ENCODE measurements at regions of chr19 and their contacts with region 1.

Region 1: GRCh38 chr19:55279770-55280643 is at the start of gene HSPBP1:
- DNase-seq: peak; percentile 88 to 94 (median 92)
- ATAC-seq: peak; percentile 87 to 94 (median 93)
- H3K4me3 ChIP-seq: peak within 1 kb of the TSS; percentile 58 to 91 (median 75)
- H3K27ac ChIP-seq: peak within 1 kb of the TSS; percentile 41 to 92 (median 84)
- H3K4me1 ChIP-seq: peaks cover 0 to 31% (median 11%) of the 10 kb centered on the region in 12 donors
- H3K27me3 ChIP-seq: no peaks in the 10 kb centered on the region
- CTCF ChIP-seq: no peak
- POLR2A ChIP-seq: peak in 1 of 2 donors; percentile 31
- total RNA-seq, gene HSPBP1: 25.7 to 42.0 (median 30.6) TPM

Region 2: GRCh38 chr19:55118401-55118991 is 161.5 kb before region 1 on chr19:
- intact Hi-C with region 1: no loop called
- DNase-seq: peak in 4 of 5 donors; percentile 57 to 84 (median 76)
- ATAC-seq: peak; percentile 12 to 43 (median 23)
- H3K4me3 ChIP-seq: peak overlapping the region; percentile 56 to 98 (median 88)
- H3K27ac ChIP-seq: peak overlapping the region; percentile 74 to 97 (median 88)
- H3K4me1 ChIP-seq: peaks cover 5 to 43% (median 29%) of the 10 kb centered on the region in 12 donors
- H3K27me3 ChIP-seq: no peaks in the 10 kb centered on the region
- CTCF ChIP-seq: no peak
- POLR2A ChIP-seq: peak in 1 of 2 donors; percentile 7

Region 3: DNA sequence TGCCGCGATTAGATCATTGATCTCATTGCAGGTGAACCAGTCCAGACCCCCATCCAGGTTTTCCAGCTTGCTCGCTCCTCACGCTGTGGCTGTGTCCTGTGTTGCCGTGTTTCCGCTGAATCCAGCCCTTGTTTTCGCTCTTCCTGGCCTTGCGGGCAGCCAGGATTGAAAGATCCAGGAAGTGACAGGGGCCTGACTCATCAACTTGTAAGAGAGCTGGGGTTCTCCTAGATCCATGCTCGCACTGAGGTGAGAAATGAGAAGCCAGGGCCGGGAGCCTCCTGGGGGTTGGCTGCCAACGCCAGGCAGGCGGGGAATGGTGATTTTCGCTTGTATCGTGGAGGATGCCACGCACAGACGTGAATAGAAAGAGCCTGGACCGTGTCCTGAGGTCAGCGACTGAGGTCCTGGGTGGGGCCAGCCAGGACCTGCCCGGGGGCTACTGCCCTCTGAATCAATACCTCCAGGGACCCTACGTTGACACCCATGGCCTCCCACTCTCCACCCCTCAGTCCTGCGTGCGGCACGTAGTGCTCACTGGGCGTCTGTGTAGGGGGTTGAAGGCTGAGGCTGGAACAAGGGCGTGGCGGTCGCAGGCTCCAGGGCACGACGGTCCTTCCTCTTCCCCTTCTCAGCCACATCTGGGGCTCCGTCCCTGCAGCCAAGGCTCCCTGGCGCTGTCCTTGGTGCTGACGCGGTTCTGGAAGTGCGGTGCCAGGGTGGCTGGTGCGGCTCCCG is 63.4 kb before region 1 on chr19:
- intact Hi-C with region 1: no loop called
- DNase-seq: peak; percentile 75 to 89 (median 85)
- ATAC-seq: peak; percentile 89 to 95 (median 92)
- H3K4me3 ChIP-seq: peak overlapping the region in 11 of 12 donors; percentile 7 to 60 (median 56)
- H3K27ac ChIP-seq: peak overlapping the region in 10 of 12 donors; percentile 30 to 89 (median 68)
- H3K4me1 ChIP-seq: peaks cover 0 to 16% (median 10%) of the 10 kb centered on the region in 12 donors
- H3K27me3 ChIP-seq: no peaks in the 10 kb centered on the region
- CTCF ChIP-seq: no peak
- POLR2A ChIP-seq: no peak

Region 4: DNA sequence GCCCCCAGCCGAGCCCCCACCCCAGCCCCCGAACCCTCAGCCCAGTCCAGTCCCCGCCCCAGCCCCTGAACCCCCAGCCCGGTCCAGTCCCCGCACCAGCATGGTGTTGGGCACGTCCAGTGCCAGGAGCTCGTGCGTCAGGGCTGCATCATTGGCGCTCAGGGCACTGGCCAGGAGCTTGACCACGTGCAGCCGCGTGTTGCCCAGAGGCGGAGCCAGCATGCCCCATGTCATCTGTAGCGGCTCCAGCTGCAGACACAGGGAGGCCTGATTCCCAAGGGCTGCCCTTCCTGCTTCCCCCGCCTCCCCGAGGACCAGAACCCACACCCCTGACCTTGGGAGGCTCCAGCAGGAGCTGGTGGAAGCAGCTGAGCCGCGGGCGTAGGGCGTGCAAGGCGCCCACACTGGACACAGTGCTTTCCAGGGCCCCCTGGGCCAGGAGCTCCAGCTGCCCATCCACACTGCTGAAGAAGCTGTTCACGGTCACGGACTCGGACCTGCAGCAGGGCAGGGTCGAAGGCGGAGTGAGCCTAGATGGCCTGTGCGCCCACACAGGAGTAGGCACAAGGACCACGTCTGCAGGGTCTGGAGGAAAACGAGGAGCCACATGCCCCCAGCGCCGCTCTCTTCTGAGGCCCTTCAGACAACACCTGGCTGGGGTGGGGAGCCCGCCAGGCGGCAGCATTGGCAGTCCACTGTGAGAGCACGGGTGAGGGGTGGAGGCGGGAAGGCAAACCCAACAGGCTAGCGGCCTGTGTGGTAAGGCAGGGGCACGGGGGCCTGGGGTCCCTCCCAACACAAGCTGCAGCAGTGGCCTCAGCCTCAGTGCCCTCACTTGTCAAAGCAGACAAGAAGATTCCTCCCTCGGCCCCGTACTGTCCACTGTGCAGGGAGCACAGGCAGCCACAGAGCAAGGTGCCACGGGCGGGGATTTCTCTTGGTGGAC is 38.6 kb before region 1 on chr19:
- intact Hi-C with region 1: no loop called
- DNase-seq: peak in 1 of 5 donors; percentile 21
- ATAC-seq: peak in 1 of 4 donors; percentile 6
- H3K4me3 ChIP-seq: no peak overlapping the region
- H3K27ac ChIP-seq: no peak overlapping the region
- H3K4me1 ChIP-seq: no peaks in the 10 kb centered on the region
- H3K27me3 ChIP-seq: no peaks in the 10 kb centered on the region
- CTCF ChIP-seq: no peak
- POLR2A ChIP-seq: no peak

Region 5: GRCh38 chr19:55297267-55297666 is 17.3 kb after region 1 on chr19:
- intact Hi-C with region 1: no loop called
- DNase-seq: no peak
- ATAC-seq: no peak
- H3K4me3 ChIP-seq: no peak overlapping the region
- H3K27ac ChIP-seq: no peak overlapping the region
- H3K4me1 ChIP-seq: peaks cover 0 to 10% (median 4%) of the 10 kb centered on the region in 12 donors
- H3K27me3 ChIP-seq: no peaks in the 10 kb centered on the region
- CTCF ChIP-seq: no peak
- POLR2A ChIP-seq: no peak

Region 6: GRCh38 chr19:55339048-55339888 is 59.3 kb after region 1 on chr19 and contains the start of gene KMT5C:
- intact Hi-C with region 1: loop called in 1 of 10 experiments (anchors 5 kb)
- DNase-seq: peak; percentile 100
- ATAC-seq: peak; percentile 93 to 97 (median 96)
- H3K4me3 ChIP-seq: peak within 1 kb of the TSS; percentile 33 to 94 (median 72)
- H3K27ac ChIP-seq: peak within 1 kb of the TSS; percentile 75 to 94 (median 90)
- H3K4me1 ChIP-seq: peaks cover 0 to 29% (median 16%) of the 10 kb centered on the region in 12 donors
- H3K27me3 ChIP-seq: peaks cover 0 to 7% (median 0%) of the 10 kb centered on the region in 9 donors
- CTCF ChIP-seq: peak in 11 of 12 donors; percentile 12 to 66 (median 35)
- POLR2A ChIP-seq: peak in 1 of 2 donors; percentile 66
- total RNA-seq, gene KMT5C: 3.6 to 10.8 (median 7.2) TPM

Region 7: DNA sequence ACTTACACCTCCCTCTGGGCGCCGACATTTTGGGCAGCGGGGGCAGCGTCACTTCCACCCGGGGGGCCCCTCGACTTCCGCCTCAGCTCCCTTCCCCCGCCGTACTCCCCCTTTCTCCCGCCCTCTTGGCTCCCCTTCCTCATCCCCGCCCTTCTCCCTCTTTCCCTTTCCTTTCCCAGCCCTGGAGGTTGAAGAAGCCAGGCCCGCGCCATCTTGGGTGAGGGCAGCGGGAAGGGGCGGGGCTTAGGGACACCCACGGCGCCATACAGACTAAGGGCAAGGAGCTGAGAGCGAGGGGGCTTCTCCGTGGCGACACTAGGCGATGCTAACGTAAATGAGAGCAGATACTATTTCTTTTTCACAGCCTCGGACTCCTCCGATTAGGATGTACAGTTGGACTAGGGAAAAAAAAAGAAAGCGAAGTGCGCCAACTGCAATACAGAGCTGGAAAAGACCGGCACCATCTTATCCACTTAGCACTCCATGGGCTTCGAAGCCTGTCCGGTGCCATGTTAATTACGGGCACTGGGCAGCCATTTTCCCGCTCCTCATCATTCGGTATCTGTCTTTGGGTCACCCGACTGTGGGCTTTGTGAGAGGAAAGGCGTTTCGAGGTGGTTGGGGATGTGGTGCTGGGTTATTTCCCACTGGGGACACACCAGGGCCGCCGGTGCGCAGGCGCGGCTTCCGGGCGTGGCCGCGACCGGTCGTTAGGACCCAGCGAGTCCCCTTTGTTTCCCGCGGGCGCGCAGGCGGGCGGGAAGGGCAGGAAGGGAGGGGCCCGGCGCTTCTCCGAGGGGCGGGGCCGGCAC is 319.7 kb after region 1 on chr19 and contains the start of gene FIZ1:
- intact Hi-C with region 1: loop called in 1 of 10 experiments (anchors 10 kb)
- DNase-seq: peak; percentile 98 to 99 (median 99)
- ATAC-seq: peak; percentile 87 to 96 (median 94)
- H3K4me3 ChIP-seq: peak within 1 kb of the TSS; percentile 62 to 99 (median 86)
- H3K27ac ChIP-seq: peak within 1 kb of the TSS; percentile 92 to 100 (median 99)
- H3K4me1 ChIP-seq: peaks cover 1 to 28% (median 14%) of the 10 kb centered on the region in 12 donors
- H3K27me3 ChIP-seq: no peaks in the 10 kb centered on the region
- CTCF ChIP-seq: no peak
- POLR2A ChIP-seq: no peak
- total RNA-seq, gene FIZ1: 11.2 to 15.4 (median 12.9) TPM